Activated CD4-positive, alpha-beta T cell treated with anti-CD3 and anti-CD28 coated beads, Interleukin-2, amount 10 ng/mL, durations not matched to agents 24 days and 14 days (primary cell): ENCODE measurements at regions of chr3 and their contacts with region 1.

Region 1: GRCh38 chr3:101635954-101636798 is 40.8 kb downstream of the ZBTB11 start:
- DNase-seq: peak; percentile 91
- H3K4me3 Mint-ChIP-seq: no peak overlapping the region
- H3K27ac Mint-ChIP-seq: no peak overlapping the region
- H3K4me1 Mint-ChIP-seq: peaks cover 2% of the 10 kb centered on the region
- H3K27me3 Mint-ChIP-seq: no peaks in the 10 kb centered on the region

Region 2: GRCh38 chr3:101069901-101070798 is 566.0 kb before region 1 on chr3:
- intact Hi-C with region 1: loop called (anchors 1 kb)
- DNase-seq: peak; percentile 86
- H3K4me3 Mint-ChIP-seq: no peak overlapping the region
- H3K27ac Mint-ChIP-seq: no peak overlapping the region
- H3K4me1 Mint-ChIP-seq: peaks cover 2% of the 10 kb centered on the region
- H3K27me3 Mint-ChIP-seq: peaks cover 25% of the 10 kb centered on the region

Region 3: DNA sequence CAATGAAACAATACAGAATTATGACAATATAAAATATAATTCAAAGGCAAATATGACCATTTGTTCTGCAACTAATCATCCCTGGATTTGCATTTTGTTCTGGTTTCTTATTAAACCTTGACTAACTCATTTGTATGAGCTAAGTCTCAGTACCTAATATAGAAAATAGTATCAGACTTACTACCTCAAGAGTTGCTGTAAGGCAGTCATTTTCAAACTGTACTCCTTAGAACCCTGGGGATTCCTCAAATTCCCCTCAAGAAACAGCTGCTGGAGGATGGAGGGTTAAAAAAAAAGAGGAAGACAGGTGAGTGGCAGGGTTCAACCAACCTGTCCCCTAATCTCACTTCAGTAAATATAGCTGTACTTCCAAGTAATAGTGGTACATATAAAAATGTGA is 29.7 kb after region 1 on chr3:
- intact Hi-C with region 1: no loop called
- DNase-seq: no peak
- H3K4me3 Mint-ChIP-seq: no peak overlapping the region
- H3K27ac Mint-ChIP-seq: no peak overlapping the region
- H3K4me1 Mint-ChIP-seq: peaks cover 5% of the 10 kb centered on the region
- H3K27me3 Mint-ChIP-seq: no peaks in the 10 kb centered on the region